Mammary epithelial cell (primary cell): ENCODE measurements at regions of chr9 and their contacts with region 1.

Region 1: DNA sequence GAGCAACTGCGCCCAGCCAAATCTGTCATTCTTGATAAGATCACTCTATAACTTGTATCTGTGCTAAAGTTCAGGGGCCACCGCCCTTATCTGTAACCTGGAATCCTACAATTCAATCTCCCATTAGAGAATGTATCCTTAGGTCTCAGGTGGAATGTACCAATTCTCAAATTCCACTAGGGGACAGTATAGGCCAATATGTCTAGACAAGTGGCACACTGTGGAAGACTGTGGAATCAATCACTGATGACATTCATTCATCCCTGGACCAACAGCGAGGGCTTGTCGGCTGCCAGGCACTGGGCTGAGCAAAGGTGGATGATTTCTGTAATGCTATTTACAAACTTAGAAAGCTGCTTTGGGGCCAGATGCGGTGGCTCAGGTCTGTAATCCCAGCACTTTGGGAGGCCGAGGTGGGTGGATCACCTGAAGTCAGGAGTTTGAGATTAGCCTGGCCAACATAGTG is 28.7 kb upstream of the MEGF9 start:
- DNase-seq: peak; percentile 41
- H3K4me3 ChIP-seq: no peak overlapping the region
- H3K27ac ChIP-seq: no peak overlapping the region
- H3K4me1 ChIP-seq: no peaks in the 10 kb centered on the region
- H3K27me3 ChIP-seq: no peaks in the 10 kb centered on the region
- CTCF ChIP-seq: peak; percentile 93 to 94

Region 2: GRCh38 chr9:120619751-120620655 is 123.0 kb before region 1 on chr9:
- CTCF ChIA-PET with region 1: no interaction called
- dilution Hi-C with region 1: loop called (anchors 25 kb)
- in situ Hi-C with region 1: no loop called
- intact Hi-C with region 1: loop called (anchors 1 kb)
- DNase-seq: peak; percentile 55
- H3K4me3 ChIP-seq: no peak overlapping the region
- H3K27ac ChIP-seq: peak overlapping the region; percentile 7
- H3K4me1 ChIP-seq: peaks cover 18% of the 10 kb centered on the region
- H3K27me3 ChIP-seq: no peaks in the 10 kb centered on the region
- CTCF ChIP-seq: peak; percentile 74 to 77

Region 3: DNA sequence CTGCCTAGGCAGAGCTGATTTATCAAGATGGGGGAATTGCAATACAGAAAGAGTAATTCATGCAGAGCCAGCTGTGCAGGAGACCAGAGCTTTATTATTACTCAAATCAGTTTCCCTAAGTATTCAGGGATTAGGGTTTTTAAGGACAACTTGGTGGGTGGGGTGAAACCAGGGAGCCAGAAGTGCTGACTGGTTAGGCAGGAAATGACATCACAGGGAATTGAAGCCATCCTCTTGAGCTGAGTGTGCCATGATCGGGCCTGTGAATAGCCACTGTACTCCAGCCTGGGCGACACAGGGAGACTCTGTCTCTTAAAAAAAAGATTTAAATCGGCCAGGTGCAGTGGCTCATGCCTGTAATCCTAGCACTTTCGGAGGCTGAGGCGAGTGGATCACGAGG is 117.8 kb before region 1 on chr9:
- CTCF ChIA-PET with region 1: no interaction called
- dilution Hi-C with region 1: loop called (anchors 25 kb)
- in situ Hi-C with region 1: no loop called
- intact Hi-C with region 1: no loop called
- DNase-seq: no peak
- H3K4me3 ChIP-seq: no peak overlapping the region
- H3K27ac ChIP-seq: no peak overlapping the region
- H3K4me1 ChIP-seq: peaks cover 13% of the 10 kb centered on the region
- H3K27me3 ChIP-seq: no peaks in the 10 kb centered on the region
- CTCF ChIP-seq: no peak

Region 4: DNA sequence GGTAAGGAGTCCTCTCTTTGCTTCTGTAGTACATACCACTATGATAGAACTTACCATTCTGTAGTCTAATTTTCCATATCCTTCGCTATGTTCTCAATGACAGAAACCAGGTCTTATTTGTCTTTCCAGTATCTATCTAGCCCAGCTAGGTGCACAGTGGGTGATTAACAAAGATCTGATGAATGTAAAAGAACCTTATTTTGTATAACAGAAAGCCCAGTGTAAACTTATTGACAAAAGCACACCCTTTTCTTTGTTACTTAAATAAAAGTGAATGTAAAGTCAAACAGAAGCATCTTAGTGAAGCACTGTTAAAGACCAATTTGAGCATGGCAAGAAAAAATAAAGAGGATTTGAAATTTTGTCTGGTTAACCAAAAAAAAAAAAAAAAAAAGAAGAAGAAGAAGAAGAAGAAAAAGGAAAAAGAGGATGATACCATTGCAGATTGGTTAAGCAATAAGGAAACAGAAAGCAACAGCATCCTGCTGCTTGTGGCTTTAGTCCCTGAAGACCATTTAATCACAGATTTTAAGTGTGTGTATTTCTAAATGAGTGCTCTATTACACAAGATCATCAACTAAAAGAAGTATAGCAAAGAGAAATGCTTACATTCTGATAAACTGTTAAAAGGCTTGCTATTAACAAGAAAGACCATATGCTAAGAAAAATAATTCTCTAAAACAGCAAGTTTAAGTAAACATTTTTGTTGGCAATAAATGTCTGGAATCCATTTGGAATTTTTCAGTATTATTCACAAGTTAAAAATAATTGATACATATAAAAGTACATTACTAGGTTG is 49.9 kb before region 1 on chr9:
- CTCF ChIA-PET with region 1: no interaction called
- dilution Hi-C with region 1: no loop called
- in situ Hi-C with region 1: no loop called
- intact Hi-C with region 1: no loop called
- DNase-seq: no peak
- H3K4me3 ChIP-seq: no peak overlapping the region
- H3K27ac ChIP-seq: no peak overlapping the region
- H3K4me1 ChIP-seq: no peaks in the 10 kb centered on the region
- H3K27me3 ChIP-seq: no peaks in the 10 kb centered on the region
- CTCF ChIP-seq: no peak